Heart right ventricle (tissue), 16 donors: ENCODE measurements at regions of chr6 and their contacts with region 1.

Region 1: DNA sequence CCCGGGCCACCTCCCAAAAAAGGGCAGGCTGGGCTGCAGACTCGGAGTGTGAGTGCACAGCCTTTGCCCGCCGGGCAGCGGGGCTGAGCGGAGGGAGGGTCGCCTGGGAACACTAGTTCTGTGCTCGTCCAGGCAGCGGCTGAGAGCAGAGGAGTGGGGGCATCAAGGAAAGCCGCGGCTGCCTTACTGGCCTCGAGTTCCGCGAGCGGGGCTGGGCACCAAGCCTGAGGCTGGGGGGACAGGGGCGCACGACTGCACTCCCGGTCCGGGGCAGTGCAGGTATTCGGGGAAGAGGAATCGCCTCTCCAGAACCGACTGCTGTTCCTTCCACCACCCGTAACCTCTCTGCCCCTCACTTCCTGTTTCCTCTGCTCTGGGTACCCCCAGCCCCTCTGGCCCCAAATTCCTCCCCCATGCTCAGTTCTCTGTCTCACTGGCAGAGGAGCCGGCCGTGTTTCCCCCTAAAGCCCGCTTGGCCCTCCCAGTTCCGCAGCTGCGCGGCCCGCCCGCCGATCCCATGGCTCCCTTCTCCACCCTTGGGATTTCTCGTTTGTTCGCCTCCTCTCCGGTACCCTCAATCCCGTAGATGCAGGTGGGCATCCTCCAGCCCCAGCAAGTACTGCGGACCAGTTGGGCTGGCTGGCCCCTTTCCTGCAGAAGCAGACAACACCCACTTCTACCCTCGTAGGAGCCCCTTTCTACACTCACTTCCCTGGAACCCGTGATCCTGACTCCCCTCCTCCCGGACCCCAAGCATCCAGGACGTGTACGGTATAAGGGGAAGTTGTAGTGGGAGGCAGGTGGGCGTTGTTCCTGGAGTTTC is 5.1 kb downstream of the RING1 start:
- DNase-seq: no peak
- ATAC-seq: peak; percentile 35 to 79 (median 58)
- H3K4me3 ChIP-seq: peak overlapping the region; percentile 37 to 70 (median 55)
- H3K27ac ChIP-seq: peak overlapping the region in 8 of 10 donors; percentile 13 to 72 (median 32)
- H3K4me1 ChIP-seq: peaks cover 2 to 35% (median 21%) of the 10 kb centered on the region in 9 donors
- H3K27me3 ChIP-seq: peaks cover 0 to 16% (median 0%) of the 10 kb centered on the region in 7 donors
- CTCF ChIP-seq: no peak

Region 2: GRCh38 chr6:33000055-33000454 is 213.3 kb before region 1 on chr6:
- intact Hi-C with region 1: loop called in 1 of 10 experiments (anchors 5 kb)
- DNase-seq: no peak
- ATAC-seq: no peak
- H3K4me3 ChIP-seq: no peak overlapping the region
- H3K27ac ChIP-seq: no peak overlapping the region
- H3K4me1 ChIP-seq: no peaks in the 10 kb centered on the region
- H3K27me3 ChIP-seq: peaks cover 0 to 48% (median 7%) of the 10 kb centered on the region in 7 donors
- CTCF ChIP-seq: peak in 5 of 9 donors; percentile 28 to 51 (median 45)

Region 3: DNA sequence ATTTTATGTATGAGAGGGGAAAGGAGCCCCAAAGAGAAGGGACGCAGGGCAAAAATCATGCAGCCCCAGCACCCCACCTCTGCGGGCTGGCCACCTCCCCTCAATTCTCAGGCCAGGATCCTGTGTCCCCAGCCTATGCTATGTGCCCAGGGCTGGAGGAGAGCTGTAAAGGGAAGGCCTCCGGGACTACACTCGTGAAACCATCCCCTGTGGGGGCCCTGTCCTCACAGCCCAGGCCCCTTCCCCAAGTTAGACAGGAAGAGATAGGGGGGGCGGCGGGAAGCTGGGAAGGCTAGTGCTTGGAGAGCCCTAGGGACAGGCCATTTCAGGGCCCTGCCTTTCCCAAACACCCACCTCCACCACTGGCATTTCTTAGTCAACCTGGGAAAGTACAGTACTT is 19.8 kb before region 1 on chr6:
- intact Hi-C with region 1: loop called in 1 of 10 experiments (anchors 1 kb)
- DNase-seq: no peak
- ATAC-seq: peak in 3 of 8 donors; percentile 2 to 6 (median 4)
- H3K4me3 ChIP-seq: peak overlapping the region in 7 of 10 donors; percentile 33 to 56 (median 49)
- H3K27ac ChIP-seq: peak overlapping the region in 8 of 10 donors; percentile 23 to 80 (median 68)
- H3K4me1 ChIP-seq: peaks cover 5 to 54% (median 33%) of the 10 kb centered on the region in 9 donors
- H3K27me3 ChIP-seq: peaks cover 0 to 35% (median 0%) of the 10 kb centered on the region in 7 donors
- CTCF ChIP-seq: no peak